Aorta (tissue), 5 donors: ENCODE measurements at regions of chr2 and their contacts with region 1.

Region 1: DNA sequence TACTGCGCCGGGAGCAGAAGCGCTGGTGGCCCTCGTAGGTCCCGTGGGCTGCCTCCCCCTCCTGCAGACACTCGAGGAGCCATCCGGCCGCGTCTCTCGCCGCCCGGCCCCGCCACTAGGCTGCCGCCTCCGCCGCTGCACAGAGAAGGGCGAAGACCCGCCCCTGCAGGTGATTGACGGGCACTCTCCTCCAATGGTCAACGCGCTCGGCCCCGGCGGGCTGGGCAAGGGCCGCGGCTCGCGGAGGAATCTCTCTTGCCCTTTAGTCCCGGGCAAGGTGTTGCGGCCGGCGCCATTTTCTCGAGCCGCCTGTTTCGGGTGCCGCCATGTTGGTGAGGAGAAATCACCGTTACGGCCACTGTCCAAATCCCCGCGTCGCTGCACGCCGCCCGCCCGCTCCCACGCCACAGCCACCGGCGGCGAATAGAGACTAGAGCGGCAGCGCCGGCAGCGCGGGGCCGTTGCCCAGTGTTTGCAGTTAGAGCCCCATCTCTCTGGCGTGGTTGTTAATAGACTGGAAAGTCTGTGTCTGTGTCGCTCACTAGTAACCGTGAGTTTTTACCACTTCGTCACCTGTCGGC is at the start of gene ZC3H6:
- DNase-seq: peak; percentile 99 to 100
- ATAC-seq: peak; percentile 99
- H3K4me3 ChIP-seq: peak within 1 kb of the TSS; percentile 82 to 94
- H3K27ac ChIP-seq: peak within 1 kb of the TSS; percentile 99
- H3K4me1 ChIP-seq: no peaks in the 10 kb centered on the region
- H3K27me3 ChIP-seq: no peaks in the 10 kb centered on the region
- total RNA-seq, gene ZC3H6: 16.2 to 18.2 TPM

Region 2: DNA sequence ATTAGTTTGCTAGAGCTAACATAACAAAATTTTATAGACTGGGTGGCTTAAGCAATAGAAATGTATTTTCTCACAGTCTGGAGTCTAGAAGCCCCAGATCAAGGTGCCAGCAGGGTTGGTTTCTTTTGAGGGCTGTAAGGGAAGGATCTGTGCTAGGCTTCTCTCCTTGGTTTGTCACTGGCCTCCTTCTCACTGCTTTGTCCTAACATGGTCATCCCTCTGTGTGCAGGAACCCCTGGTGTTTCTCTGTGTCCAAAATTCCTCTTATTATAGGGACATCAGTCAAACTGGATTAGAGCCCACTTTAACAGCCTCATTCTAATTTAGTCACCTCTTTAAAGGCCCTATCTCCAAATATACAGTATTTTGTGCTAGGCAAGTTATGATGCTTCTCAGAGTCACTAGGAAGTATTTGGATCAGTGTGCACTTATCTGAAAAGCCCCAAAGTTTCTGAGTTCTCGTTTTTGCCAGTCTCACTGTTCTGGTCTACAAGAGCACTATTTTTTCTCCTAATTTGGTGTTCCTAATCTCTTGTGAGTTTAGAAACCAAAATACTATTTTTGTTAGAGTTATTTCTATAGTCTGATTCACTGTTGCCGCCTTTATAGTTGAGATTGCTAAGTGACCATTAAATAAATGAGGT is 29.0 kb after region 1 on chr2:
- intact Hi-C with region 1: loop called in 1 of 2 experiments (anchors 2 kb)
- DNase-seq: no peak
- ATAC-seq: peak; percentile 73
- H3K4me3 ChIP-seq: no peak overlapping the region
- H3K27ac ChIP-seq: peak overlapping the region; percentile 50 to 97
- H3K4me1 ChIP-seq: peaks cover 1 to 7% of the 10 kb centered on the region in 2 donors
- H3K27me3 ChIP-seq: no peaks in the 10 kb centered on the region

Region 3: GRCh38 chr2:112314856-112315255 is 39.5 kb after region 1 on chr2:
- intact Hi-C with region 1: loop called in 1 of 2 experiments (anchors 5 kb)
- DNase-seq: no peak
- ATAC-seq: no peak
- H3K4me3 ChIP-seq: no peak overlapping the region
- H3K27ac ChIP-seq: no peak overlapping the region
- H3K4me1 ChIP-seq: peaks cover 0 to 1% of the 10 kb centered on the region in 2 donors
- H3K27me3 ChIP-seq: no peaks in the 10 kb centered on the region

Region 4: DNA sequence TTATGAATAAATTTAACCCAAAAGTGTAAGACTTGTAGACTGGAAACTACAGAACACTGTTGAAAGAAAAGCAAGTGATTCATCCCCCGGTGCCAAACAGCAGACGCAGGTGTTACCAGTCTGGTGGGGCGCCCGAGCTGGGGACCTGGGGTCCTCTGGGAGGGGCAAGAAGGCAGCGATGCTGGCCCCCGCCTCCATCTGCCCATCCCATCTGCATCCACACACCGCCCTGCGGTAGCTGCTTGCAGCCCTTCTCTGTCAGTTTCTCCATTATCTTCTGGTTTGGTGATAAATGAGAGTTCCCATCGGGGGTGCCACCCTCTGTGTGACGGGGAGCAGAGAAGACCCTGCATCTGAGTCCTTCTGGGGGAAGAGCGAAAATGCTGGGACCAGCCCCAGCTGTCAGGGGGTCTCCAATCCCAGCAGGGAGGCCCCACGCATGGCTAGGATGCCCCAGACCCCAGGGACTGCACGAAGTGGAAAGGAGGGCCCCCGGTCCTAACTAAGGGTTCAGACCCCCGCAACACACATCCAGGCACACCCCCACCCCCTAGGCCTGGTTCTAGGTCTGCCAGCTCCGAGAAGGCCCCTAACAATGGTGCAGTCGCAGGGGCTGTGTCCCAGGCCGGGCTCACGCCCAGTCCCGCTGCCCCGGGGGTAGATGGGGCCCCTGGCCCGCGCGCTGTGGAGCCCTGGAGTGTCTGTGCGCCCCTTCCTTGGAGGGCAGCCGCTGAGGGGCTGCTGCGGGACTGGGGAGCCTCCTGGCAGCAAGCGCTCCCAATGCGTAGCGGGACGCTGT is 158.7 kb after region 1 on chr2:
- intact Hi-C with region 1: loop called in 1 of 2 experiments (anchors 5 kb)
- DNase-seq: peak in 1 of 2 donors; percentile 65
- ATAC-seq: no peak
- H3K4me3 ChIP-seq: no peak overlapping the region
- H3K27ac ChIP-seq: no peak overlapping the region
- H3K4me1 ChIP-seq: no peaks in the 10 kb centered on the region
- H3K27me3 ChIP-seq: no peaks in the 10 kb centered on the region